Naive thymus-derived CD4-positive, alpha-beta T cell (primary cell): ENCODE measurements at regions of chr3 and their contacts with region 1.

Region 1: DNA sequence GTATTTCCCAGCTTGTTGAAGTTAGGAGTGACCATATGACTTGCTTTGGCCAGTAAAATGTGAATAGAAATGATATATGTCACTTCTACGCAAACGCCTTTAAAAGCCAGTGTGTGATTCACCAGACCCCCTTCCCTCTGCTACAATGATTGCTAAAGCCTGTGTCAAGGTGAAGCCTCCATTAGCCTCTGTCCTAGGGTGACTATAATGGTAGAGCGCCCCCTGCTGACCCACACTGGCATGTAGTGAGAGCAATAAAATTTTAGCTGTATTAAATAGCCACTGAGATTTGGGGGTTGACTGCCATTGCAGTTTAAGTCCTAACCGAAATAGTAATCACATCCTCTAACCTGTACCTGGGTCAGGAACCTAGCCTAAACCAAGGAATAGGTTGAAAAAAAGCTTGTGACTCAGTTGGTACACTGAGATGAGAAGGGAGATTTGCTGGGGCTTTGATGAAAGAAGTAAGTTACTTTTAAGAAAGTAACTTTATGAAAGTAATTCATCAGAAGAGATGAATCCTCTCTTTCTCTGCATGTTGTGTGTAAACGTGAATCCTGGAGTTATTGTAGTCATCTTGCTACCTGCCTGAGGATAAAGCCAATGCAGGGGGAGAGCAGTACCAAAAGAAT is 52.6 kb downstream of the GTF2E1 start:
- DNase-seq: peak; percentile 62 to 83 (median 79)
- ATAC-seq: peak; percentile 96
- H3K4me3 ChIP-seq: no peak overlapping the region
- H3K4me3 Mint-ChIP-seq: no peak overlapping the region
- H3K27ac ChIP-seq: no peak overlapping the region
- H3K27ac Mint-ChIP-seq: no peak overlapping the region
- H3K4me1 ChIP-seq: peaks cover 0 to 4% of the 10 kb centered on the region in 2 donors
- H3K4me1 Mint-ChIP-seq: peaks cover 0 to 20% (median 17%) of the 10 kb centered on the region in 7 donors
- H3K27me3 ChIP-seq: no peaks in the 10 kb centered on the region
- H3K27me3 Mint-ChIP-seq: no peaks in the 10 kb centered on the region

Region 2: DNA sequence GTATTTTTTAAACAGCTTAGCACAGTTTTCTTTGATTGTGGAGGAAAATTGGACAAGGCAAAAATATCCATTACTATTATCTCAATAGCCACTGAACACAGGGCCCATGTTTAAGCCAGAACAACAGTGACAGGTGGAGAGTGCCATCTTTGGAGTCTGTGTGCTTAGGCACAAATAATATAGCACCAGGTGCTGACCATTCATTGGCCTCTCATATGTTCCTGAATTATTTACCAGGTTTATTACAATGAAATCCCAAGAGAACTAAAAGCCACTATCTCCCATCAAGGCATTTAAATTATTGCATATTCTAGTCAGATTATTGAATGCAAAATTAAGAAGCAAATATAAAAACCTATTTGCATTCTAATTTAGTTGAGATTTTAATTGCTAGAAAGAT is 549.7 kb before region 1 on chr3:
- CTCF ChIA-PET with region 1: interaction called, 3 read pairs
- POLR2A ChIA-PET with region 1: no interaction called
- intact Hi-C with region 1: loop called (anchors 1 to 10 kb)
- DNase-seq: no peak
- ATAC-seq: no peak
- H3K4me3 ChIP-seq: no peak overlapping the region
- H3K4me3 Mint-ChIP-seq: no peak overlapping the region
- H3K27ac ChIP-seq: no peak overlapping the region
- H3K27ac Mint-ChIP-seq: no peak overlapping the region
- H3K4me1 ChIP-seq: no peaks in the 10 kb centered on the region
- H3K4me1 Mint-ChIP-seq: no peaks in the 10 kb centered on the region
- H3K27me3 ChIP-seq: no peaks in the 10 kb centered on the region
- H3K27me3 Mint-ChIP-seq: peaks cover 21 to 38% (median 25%) of the 10 kb centered on the region in 5 donors

Region 3: DNA sequence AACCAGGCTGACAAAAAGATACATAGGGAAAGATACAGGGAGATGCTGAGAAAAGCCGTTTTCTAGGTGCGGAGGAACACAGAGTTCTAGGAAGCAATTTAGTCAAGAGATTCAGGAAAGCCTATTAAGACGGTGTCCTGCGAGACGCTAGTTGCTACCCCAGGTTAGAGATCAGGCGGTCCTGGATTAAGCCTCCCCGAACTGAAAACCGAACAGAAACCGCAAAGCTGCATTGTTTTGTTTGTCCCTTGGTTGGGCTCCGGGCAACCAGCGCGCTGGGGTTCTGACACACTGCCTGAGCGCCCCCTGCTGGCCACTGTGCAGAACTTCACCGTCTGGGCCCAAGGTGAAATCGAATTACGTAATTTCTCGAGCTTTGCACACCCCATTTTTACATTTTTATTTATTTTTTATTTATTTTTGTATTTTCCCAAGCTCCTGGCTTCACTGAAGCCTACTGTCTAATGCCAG is 236.3 kb before region 1 on chr3:
- CTCF ChIA-PET with region 1: interaction called, 114 read pairs
- POLR2A ChIA-PET with region 1: interaction called, 5 read pairs
- intact Hi-C with region 1: loop called (anchors 1 kb)
- DNase-seq: peak; percentile 80 to 89 (median 88)
- ATAC-seq: peak; percentile 97
- H3K4me3 ChIP-seq: peak overlapping the region; percentile 61
- H3K4me3 Mint-ChIP-seq: peak overlapping the region; percentile 75 to 87 (median 82)
- H3K27ac ChIP-seq: peak overlapping the region; percentile 58
- H3K27ac Mint-ChIP-seq: peak overlapping the region; percentile 54 to 91 (median 83)
- H3K4me1 ChIP-seq: peaks cover 6% of the 10 kb centered on the region in 2 donors
- H3K4me1 Mint-ChIP-seq: peaks cover 6 to 23% (median 16%) of the 10 kb centered on the region in 7 donors
- H3K27me3 ChIP-seq: peaks cover 0 to 4% of the 10 kb centered on the region in 2 donors
- H3K27me3 Mint-ChIP-seq: peaks cover 0 to 13% (median 7%) of the 10 kb centered on the region in 5 donors

Region 4: GRCh38 chr3:120596116-120596852 is 198.8 kb before region 1 on chr3 and contains the start of gene NDUFB4:
- CTCF ChIA-PET with region 1: interaction called, 6 read pairs
- POLR2A ChIA-PET with region 1: interaction called, 4 read pairs
- intact Hi-C with region 1: loop called (anchors 1 kb)
- DNase-seq: peak; percentile 84 to 97 (median 93)
- ATAC-seq: peak; percentile 97
- H3K4me3 ChIP-seq: peak within 1 kb of the TSS; percentile 99
- H3K4me3 Mint-ChIP-seq: peak within 1 kb of the TSS in 8 of 10 donors; percentile 85 to 99 (median 96)
- H3K27ac ChIP-seq: peak within 1 kb of the TSS; percentile 92
- H3K27ac Mint-ChIP-seq: peak within 1 kb of the TSS in 5 of 9 donors; percentile 94 to 99 (median 98)
- H3K4me1 ChIP-seq: peaks cover 25 to 27% of the 10 kb centered on the region in 2 donors
- H3K4me1 Mint-ChIP-seq: peaks cover 0 to 20% (median 11%) of the 10 kb centered on the region in 7 donors
- H3K27me3 ChIP-seq: no peaks in the 10 kb centered on the region
- H3K27me3 Mint-ChIP-seq: peaks cover 0 to 20% (median 0%) of the 10 kb centered on the region in 5 donors
- total RNA-seq, gene NDUFB4: 63.4 to 126 (median 76.2) TPM

Region 5: GRCh38 chr3:120688121-120688520 is 107.0 kb before region 1 on chr3:
- CTCF ChIA-PET with region 1: no interaction called
- POLR2A ChIA-PET with region 1: no interaction called
- intact Hi-C with region 1: loop called in 1 of 2 experiments (anchors 5 kb)
- DNase-seq: no peak
- ATAC-seq: no peak
- H3K4me3 ChIP-seq: no peak overlapping the region
- H3K4me3 Mint-ChIP-seq: no peak overlapping the region
- H3K27ac ChIP-seq: no peak overlapping the region
- H3K27ac Mint-ChIP-seq: no peak overlapping the region
- H3K4me1 ChIP-seq: no peaks in the 10 kb centered on the region
- H3K4me1 Mint-ChIP-seq: peaks cover 0 to 5% (median 0%) of the 10 kb centered on the region in 7 donors
- H3K27me3 ChIP-seq: no peaks in the 10 kb centered on the region
- H3K27me3 Mint-ChIP-seq: no peaks in the 10 kb centered on the region